ENCODE measurements at regions of chr14 and their contacts with region 1.

Region 1: DNA sequence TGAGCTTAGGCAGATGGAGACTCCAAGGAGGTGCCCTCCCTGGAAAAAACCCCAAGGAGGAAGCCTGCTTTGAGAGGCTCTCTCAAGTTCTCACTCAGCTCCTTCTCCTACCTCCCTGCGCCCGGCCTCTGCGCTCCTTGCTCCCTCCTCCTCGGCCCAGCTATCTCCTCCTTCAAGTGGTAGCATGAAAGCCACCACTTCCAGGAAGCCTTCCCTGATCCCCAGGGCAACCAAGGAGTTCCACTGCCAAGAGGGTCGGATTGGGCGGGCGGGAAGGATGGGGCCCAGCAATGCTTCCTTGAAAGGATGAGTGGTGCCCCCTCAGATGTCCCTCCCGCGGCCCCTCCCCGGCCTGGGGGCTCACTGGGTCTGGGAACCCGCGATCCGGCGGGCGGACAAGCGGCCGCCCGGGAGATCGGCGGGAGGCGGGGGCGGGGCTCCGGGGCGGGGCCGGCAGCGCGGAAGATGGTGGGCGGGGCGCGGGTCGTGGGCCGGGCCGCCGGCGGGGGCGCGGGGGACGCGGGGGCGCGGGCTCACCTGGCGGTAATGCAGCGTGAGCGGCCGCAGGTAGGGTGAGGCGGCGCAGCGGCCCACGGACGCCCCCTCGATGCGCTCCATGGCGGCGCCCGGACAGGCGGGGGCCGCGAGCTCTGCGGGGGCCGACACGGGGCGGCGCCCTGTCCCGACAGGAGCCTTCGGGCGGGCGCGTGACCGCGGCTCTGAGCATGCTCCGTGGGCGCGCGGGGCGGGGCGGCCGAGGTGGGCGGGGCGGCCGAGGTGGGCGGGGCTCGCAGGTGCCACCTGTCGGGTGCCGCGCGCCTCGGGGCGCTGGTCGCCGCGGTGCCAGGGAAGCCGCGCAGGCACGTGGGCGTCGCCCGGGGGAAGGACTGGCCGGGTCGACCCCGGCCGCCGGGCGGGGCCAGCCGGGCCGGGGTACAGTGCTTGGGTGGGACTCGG is at the start of gene NUDT14:
- DNase-seq: peak; percentile 69 to 88 (median 82)
- ATAC-seq: peak; percentile 94
- H3K4me3 ChIP-seq: peak within 1 kb of the TSS; percentile 52
- H3K4me3 Mint-ChIP-seq: peak within 1 kb of the TSS; percentile 68 to 86 (median 77)
- H3K27ac ChIP-seq: peak within 1 kb of the TSS; percentile 53
- H3K27ac Mint-ChIP-seq: peak within 1 kb of the TSS in 7 of 9 donors; percentile 10 to 76 (median 64)
- H3K4me1 ChIP-seq: peaks cover 4 to 12% of the 10 kb centered on the region in 2 donors
- H3K4me1 Mint-ChIP-seq: peaks cover 0 to 23% (median 15%) of the 10 kb centered on the region in 7 donors
- H3K27me3 ChIP-seq: no peaks in the 10 kb centered on the region
- H3K27me3 Mint-ChIP-seq: peaks cover 0 to 4% (median 0%) of the 10 kb centered on the region in 5 donors
- total RNA-seq, gene NUDT14: 17.3 to 29.6 (median 20.6) TPM

Region 2: GRCh38 chr14:105093431-105094192 is 87.3 kb before region 1 on chr14:
- CTCF ChIA-PET with region 1: no interaction called
- POLR2A ChIA-PET with region 1: interaction called, 3 read pairs
- intact Hi-C with region 1: loop called (anchors 1 to 5 kb)
- DNase-seq: peak in 7 of 9 donors; percentile 23 to 84 (median 31)
- ATAC-seq: peak; percentile 47
- H3K4me3 ChIP-seq: peak overlapping the region; percentile 67
- H3K4me3 Mint-ChIP-seq: peak overlapping the region; percentile 46 to 84 (median 72)
- H3K27ac ChIP-seq: peak overlapping the region; percentile 87
- H3K27ac Mint-ChIP-seq: peak overlapping the region in 6 of 9 donors; percentile 41 to 72 (median 60)
- H3K4me1 ChIP-seq: peaks cover 14 to 15% of the 10 kb centered on the region in 2 donors
- H3K4me1 Mint-ChIP-seq: peaks cover 5 to 22% (median 16%) of the 10 kb centered on the region in 7 donors
- H3K27me3 ChIP-seq: no peaks in the 10 kb centered on the region
- H3K27me3 Mint-ChIP-seq: peaks cover 0 to 4% (median 0%) of the 10 kb centered on the region in 5 donors

Region 3: DNA sequence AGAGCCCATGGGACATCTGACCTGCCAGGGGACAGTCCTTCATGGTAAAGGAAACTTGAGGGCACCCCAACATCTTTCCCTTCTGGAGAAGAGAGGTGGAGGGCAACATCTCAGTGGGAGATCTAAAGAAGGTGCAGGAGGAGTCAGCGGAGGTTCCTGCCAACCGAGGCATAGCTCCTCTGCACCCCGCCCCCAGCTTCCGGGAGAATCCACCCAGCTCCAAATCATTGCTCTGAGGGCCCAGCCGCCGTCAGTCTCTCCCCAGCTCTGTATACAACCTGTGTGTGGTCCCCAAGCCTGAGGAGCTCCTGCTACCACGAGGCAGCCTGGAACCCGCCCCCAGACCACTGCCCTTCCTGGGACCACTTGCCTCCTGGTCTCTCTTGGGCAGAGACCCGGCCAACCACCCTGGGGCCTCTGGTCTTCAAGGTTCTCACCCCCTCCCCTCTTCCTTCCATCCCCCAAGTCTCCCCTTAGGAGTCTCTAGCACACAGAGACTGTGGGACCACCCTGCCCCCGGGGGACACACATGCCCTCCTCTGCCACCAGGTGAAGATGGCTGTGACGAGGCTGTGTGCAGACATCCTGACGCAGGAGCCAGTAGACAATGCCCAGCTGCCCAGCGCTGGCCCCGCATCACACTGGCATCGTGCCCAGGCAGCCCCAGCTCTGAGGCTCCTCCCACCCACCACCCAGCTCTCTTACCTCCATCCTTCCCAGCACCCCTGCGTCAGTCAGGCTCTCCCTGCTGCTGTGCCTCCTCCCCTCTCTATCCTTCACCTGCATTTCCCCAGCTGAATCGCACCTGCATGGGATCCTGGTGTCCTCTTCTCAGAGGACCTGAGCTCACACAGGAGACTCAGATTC is 13.3 kb after region 1 on chr14:
- CTCF ChIA-PET with region 1: interaction called, 7 read pairs
- POLR2A ChIA-PET with region 1: interaction called, 13 read pairs
- intact Hi-C with region 1: loop called in 1 of 2 experiments (anchors 1 kb)
- DNase-seq: peak in 3 of 9 donors; percentile 22 to 50 (median 28)
- ATAC-seq: peak; percentile 43
- H3K4me3 ChIP-seq: no peak overlapping the region
- H3K4me3 Mint-ChIP-seq: peak overlapping the region; percentile 39 to 84 (median 60)
- H3K27ac ChIP-seq: no peak overlapping the region
- H3K27ac Mint-ChIP-seq: peak overlapping the region in 4 of 9 donors; percentile 1 to 78 (median 52)
- H3K4me1 ChIP-seq: peaks cover 4 to 48% of the 10 kb centered on the region in 2 donors
- H3K4me1 Mint-ChIP-seq: peaks cover 16 to 33% (median 23%) of the 10 kb centered on the region in 7 donors
- H3K27me3 ChIP-seq: peaks cover 6% of the 10 kb centered on the region in 2 donors
- H3K27me3 Mint-ChIP-seq: peaks cover 13 to 36% (median 30%) of the 10 kb centered on the region in 5 donors

Measured in naive thymus-derived CD4-positive, alpha-beta T cell (primary cell).